PC-3 (cell line): ENCODE measurements at regions of chr19 and their contacts with region 1.

Region 1: GRCh38 chr19:8423817-8424223 is 10.7 kb downstream of the MARCHF2 start:
- DNase-seq: peak; percentile 96
- ATAC-seq: peak; percentile 98
- H3K4me3 ChIP-seq: peak overlapping the region; percentile 49; the same call in 1 of the 2 replicates
- H3K27ac ChIP-seq: peak overlapping the region; percentile 36
- H3K4me1 ChIP-seq: peaks cover 15% of the 10 kb centered on the region
- H3K27me3 ChIP-seq: no peaks in the 10 kb centered on the region
- CTCF ChIP-seq: no peak

Region 2: GRCh38 chr19:8513687-8514504 is 90.1 kb after region 1 on chr19 and contains the start of gene ZNF414:
- CTCF ChIA-PET with region 1: interaction called, 3 read pairs
- POLR2A ChIA-PET with region 1: interaction called, 27 read pairs
- intact Hi-C with region 1: no loop called
- DNase-seq: peak; percentile 98
- ATAC-seq: peak; percentile 95
- H3K4me3 ChIP-seq: peak within 1 kb of the TSS; percentile 78
- H3K27ac ChIP-seq: peak within 1 kb of the TSS; percentile 91
- H3K4me1 ChIP-seq: peaks cover 9% of the 10 kb centered on the region
- H3K27me3 ChIP-seq: no peaks in the 10 kb centered on the region
- CTCF ChIP-seq: no peak
- total RNA-seq, gene ZNF414: 4.6 and 4.7 TPM in 2 replicates

Region 3: DNA sequence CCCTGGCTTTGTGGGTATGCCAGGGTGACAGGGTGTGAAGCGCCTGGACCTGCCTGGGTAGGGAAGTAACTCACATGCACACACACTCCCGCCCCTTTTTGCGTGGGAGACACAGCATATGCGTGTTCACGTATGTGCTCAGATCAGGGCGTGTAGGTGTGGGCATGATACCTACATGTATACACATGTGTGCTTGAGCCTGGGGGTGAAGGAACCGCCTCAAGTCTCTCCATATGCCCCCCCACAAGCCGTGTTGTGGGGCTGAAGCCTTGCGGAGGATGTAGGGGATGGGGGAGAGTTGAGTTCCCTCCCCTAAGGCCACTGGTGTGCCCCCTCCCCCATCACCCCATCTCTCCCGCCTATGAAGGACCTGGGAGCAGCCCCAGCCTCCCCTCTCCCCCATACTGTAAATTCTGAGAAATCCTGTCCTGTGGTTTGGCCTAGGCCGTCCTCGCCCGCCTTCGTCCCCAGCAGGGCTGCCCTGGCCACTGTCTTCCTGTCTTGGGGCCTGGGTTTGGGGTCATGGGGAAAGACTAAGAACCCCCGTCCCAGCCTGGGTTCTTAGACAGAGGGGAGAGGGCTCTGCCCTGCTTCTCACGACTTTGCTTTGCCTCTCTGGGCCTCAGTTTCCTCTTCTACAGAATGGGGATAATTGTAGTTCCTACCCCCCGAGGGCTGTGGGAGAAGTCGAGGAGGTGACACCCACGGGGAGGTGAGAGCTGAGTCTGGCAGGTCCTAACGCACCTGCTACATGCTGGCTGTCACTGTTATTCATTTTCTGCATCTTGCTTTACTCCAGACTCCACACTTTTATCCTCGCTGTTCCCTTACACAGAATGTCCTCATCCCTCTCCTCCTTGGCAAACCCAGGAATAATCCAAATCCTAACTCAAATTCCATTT is 260.4 kb after region 1 on chr19:
- CTCF ChIA-PET with region 1: no interaction called
- POLR2A ChIA-PET with region 1: no interaction called
- intact Hi-C with region 1: no loop called
- DNase-seq: no peak
- ATAC-seq: no peak
- H3K4me3 ChIP-seq: no peak overlapping the region
- H3K27ac ChIP-seq: no peak overlapping the region
- H3K4me1 ChIP-seq: no peaks in the 10 kb centered on the region
- H3K27me3 ChIP-seq: peaks cover 19% of the 10 kb centered on the region; the same call in 1 of the 2 replicates
- CTCF ChIP-seq: no peak